Ovary (tissue), 10 donors: ENCODE measurements at regions of chr3 and their contacts with region 1.

Region 1: DNA sequence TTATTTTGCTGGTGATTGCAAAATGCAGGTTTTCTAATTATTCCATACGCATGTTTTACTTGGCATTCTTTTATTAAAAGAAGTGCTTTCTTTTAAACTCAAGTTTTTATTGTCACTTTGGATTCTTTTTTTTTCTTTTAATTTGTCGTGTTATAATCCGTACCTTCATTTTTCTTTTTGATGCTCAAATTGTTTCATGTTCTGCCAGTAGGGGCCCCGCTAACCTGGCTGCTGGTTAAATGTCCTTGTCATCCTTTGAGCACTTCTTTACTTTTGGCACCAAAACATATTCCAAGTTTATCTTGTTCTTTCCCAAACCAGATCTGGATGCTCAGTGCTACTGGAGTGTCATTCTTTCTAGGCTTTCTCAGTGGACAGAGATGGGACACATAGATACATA is 31.6 kb downstream of the MED12L start:
- DNase-seq: no peak
- H3K4me3 ChIP-seq: no peak overlapping the region
- H3K27ac ChIP-seq: no peak overlapping the region
- H3K4me1 ChIP-seq: no peaks in the 10 kb centered on the region
- H3K27me3 ChIP-seq: no peaks in the 10 kb centered on the region
- CTCF ChIP-seq: no peak
- EP300 ChIP-seq: no peak
- POLR2A ChIP-seq: no peak

Region 2: DNA sequence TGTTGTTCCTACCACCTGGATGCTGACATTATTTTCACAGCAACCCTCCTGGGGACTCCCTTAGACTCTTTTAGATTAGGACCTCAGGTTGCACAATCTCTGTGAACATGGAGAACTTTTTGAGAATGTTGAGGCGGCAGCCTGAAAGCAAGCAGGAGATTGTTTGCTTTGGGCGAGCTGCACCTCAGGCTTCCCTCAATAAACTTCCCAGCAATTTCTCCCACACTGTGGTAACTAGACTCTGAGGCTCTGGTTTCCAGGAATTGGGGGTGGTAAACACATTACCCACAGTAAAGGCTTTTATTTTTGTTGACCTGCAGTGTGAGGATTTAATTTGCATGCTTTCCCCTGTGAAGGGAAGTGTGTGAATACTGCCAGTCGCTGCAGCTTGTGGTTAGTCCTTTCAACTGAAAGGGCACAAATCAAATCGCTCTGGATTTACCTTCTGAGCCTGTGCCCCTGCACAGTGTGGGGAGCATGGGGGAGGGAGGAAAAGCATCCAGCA is 318.9 kb before region 1 on chr3:
- intact Hi-C with region 1: loop called in 1 of 4 experiments (anchors 10 kb)
- DNase-seq: no peak
- H3K4me3 ChIP-seq: no peak overlapping the region
- H3K27ac ChIP-seq: no peak overlapping the region
- H3K4me1 ChIP-seq: peaks cover 1% of the 10 kb centered on the region
- H3K27me3 ChIP-seq: no peaks in the 10 kb centered on the region
- CTCF ChIP-seq: no peak
- EP300 ChIP-seq: no peak
- POLR2A ChIP-seq: no peak

Region 3: GRCh38 chr3:151156618-151157216 is 39.7 kb after region 1 on chr3:
- intact Hi-C with region 1: no loop called
- DNase-seq: no peak
- H3K4me3 ChIP-seq: no peak overlapping the region
- H3K27ac ChIP-seq: no peak overlapping the region
- H3K4me1 ChIP-seq: peaks cover 4% of the 10 kb centered on the region
- H3K27me3 ChIP-seq: no peaks in the 10 kb centered on the region
- CTCF ChIP-seq: peak in 1 of 3 donors; percentile 25
- EP300 ChIP-seq: no peak
- POLR2A ChIP-seq: no peak

Region 4: GRCh38 chr3:151327571-151328198 is 210.6 kb after region 1 on chr3:
- intact Hi-C with region 1: no loop called
- DNase-seq: no peak
- H3K4me3 ChIP-seq: no peak overlapping the region
- H3K27ac ChIP-seq: no peak overlapping the region
- H3K4me1 ChIP-seq: no peaks in the 10 kb centered on the region
- H3K27me3 ChIP-seq: no peaks in the 10 kb centered on the region
- CTCF ChIP-seq: no peak
- EP300 ChIP-seq: no peak
- POLR2A ChIP-seq: no peak